ENCODE measurements at regions of chr6 and their contacts with region 1.

Region 1: DNA sequence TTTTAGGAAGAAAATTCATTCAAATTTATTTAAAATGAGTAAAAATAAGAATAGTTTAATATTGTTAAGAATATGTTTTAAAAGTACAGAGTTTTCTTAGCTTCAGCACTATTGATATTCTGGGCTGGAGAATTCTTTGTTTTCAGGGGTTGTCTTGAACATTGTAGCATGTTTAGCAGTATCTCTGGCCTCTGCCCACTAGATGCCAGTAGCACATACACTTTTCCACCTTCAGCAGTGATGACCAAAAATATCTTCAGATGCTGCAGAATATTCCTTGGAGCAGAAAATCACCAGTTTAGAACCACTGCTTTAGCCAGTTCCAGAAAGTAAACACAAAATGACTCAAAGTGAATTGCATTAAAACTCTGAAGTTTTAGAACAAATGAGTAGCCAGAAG is 19.4 kb upstream of the SDHAF4 start:
- DNase-seq: no peak
- ATAC-seq: peak; percentile 69 to 86 (median 77)
- H3K4me3 ChIP-seq: no peak overlapping the region
- H3K27ac ChIP-seq: peak overlapping the region in 1 of 12 donors; percentile 5
- H3K4me1 ChIP-seq: peaks cover 0 to 7% (median 0%) of the 10 kb centered on the region in 12 donors
- H3K27me3 ChIP-seq: no peaks in the 10 kb centered on the region
- CTCF ChIP-seq: peak in 11 of 12 donors; percentile 17 to 61 (median 47)
- POLR2A ChIP-seq: no peak

Region 2: GRCh38 chr6:70413114-70413991 is 134.0 kb before region 1 on chr6 and contains the start of gene FAM135A:
- intact Hi-C with region 1: loop called in 1 of 10 experiments (anchors 10 kb)
- DNase-seq: peak; percentile 95 to 98 (median 97)
- ATAC-seq: peak; percentile 99
- H3K4me3 ChIP-seq: peak within 1 kb of the TSS; percentile 47 to 99 (median 94)
- H3K27ac ChIP-seq: peak within 1 kb of the TSS; percentile 62 to 92 (median 80)
- H3K4me1 ChIP-seq: peaks cover 0 to 21% (median 15%) of the 10 kb centered on the region in 12 donors
- H3K27me3 ChIP-seq: no peaks in the 10 kb centered on the region
- CTCF ChIP-seq: no peak
- POLR2A ChIP-seq: peak in 1 of 2 donors; percentile 62
- total RNA-seq, gene FAM135A: 9.7 to 14.9 (median 13.2) TPM

Region 3: GRCh38 chr6:70445001-70445400 is 102.3 kb before region 1 on chr6:
- intact Hi-C with region 1: no loop called
- DNase-seq: no peak
- ATAC-seq: no peak
- H3K4me3 ChIP-seq: no peak overlapping the region
- H3K27ac ChIP-seq: no peak overlapping the region
- H3K4me1 ChIP-seq: no peaks in the 10 kb centered on the region
- H3K27me3 ChIP-seq: no peaks in the 10 kb centered on the region
- CTCF ChIP-seq: no peak
- POLR2A ChIP-seq: no peak

Region 4: DNA sequence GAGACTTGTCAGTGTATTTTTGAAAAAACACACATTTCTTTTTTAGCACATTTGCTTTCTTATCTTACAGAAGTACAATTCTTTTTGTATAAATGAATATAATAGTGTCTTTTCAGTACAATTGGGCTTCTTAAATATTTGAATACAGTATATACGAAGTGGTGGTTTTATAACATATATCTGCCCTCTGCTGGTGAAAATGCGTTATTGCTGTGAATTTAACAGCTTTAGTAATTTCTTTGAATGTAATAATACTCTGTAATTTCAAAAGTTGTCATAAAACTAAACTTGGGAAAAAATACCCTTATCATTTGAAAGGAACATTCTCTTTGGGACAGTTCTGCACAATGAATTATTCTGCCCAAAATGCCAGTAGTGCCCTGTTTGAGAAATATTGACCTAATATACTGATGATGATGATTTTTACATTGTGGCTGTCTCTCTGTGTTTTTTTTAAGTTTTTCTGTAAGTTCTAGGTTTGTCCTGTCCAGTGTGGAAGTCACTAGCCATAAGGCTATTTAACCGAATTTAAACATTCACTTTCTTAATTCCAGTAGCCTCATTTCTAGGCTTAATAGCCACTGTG is 139.3 kb after region 1 on chr6:
- intact Hi-C with region 1: loop called (anchors 1 to 10 kb)
- DNase-seq: no peak
- ATAC-seq: peak in 1 of 4 donors; percentile 67
- H3K4me3 ChIP-seq: no peak overlapping the region
- H3K27ac ChIP-seq: no peak overlapping the region
- H3K4me1 ChIP-seq: peaks cover 0 to 36% (median 22%) of the 10 kb centered on the region in 12 donors
- H3K27me3 ChIP-seq: no peaks in the 10 kb centered on the region
- CTCF ChIP-seq: peak; percentile 66 to 87 (median 83)
- POLR2A ChIP-seq: no peak

Region 5: DNA sequence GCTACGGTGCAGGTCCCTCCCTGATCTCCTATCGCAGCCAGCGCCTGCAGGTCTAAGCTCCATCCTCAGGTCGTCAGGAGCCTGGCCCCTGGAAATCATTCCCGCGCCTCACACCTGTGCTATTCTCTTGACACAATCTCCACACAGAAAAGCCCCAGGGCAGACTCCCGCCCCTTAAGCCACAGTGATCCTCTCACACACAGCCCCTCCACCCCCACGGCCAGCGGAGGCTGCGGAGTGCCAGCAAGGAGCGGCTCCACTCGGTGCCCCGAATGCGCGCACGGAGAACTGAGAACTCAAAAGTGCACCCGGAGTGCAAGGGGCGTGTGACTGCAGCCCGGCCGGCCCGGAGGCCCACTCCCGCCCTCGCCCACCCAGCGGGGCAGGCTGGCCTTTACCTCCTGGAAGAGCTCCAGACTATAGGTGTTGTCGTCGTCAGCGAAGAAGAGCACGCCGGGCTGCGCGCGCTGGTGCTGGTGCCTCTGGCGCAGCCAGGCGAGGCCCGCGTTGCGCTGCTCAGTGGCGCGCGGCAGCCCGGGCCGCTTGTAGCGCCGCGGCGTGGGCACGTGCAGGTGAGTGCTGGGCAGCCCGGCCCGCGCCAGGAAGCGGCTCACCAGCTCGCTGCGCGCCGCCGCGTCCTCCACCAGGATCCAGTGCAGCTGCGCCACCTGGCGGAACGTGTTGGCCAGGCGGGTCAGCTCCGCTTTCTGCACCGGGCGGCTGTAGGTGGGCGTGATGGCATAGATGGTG is 408.3 kb after region 1 on chr6:
- intact Hi-C with region 1: loop called in 3 of 10 experiments (anchors 5 to 10 kb)
- DNase-seq: peak; percentile 80 to 91 (median 80)
- ATAC-seq: peak; percentile 64 to 98 (median 94)
- H3K4me3 ChIP-seq: peak overlapping the region; percentile 42 to 70 (median 58)
- H3K27ac ChIP-seq: no peak overlapping the region
- H3K4me1 ChIP-seq: peaks cover 0 to 24% (median 18%) of the 10 kb centered on the region in 12 donors
- H3K27me3 ChIP-seq: peaks cover 0 to 53% (median 30%) of the 10 kb centered on the region in 9 donors
- CTCF ChIP-seq: peak; percentile 72 to 93 (median 83)
- POLR2A ChIP-seq: no peak

Measured in heart left ventricle (tissue), 16 donors.